ENCODE measurements at regions of chr4 and their contacts with region 1.

Region 1: DNA sequence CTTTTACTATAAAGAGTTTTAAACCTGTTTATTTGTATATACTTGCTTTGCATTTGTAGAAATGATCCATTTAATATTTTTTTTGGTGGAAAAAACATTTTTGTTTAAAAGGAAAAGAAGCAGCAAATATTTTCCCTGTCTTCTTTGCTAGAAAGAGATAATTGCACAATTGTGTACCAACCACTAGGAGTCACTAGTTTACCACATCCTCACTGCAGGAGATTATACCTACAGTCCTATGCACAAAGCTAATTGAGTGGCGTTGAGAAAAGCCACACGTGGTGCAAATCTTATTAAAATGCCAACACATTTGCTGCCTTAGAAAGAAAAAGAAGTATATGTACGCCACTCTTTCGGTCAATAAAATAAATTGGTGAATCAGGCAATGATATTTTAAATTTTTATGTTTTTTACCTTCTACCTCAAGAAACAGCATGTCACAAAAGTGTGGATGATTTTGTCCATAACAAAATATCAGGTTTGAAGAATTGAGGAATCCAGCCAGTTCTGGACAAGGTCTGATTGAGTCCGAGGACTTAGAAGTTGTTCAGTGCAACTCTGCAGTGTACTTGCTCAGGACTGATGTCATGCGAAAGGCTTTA is 102.9 kb downstream of the GRXCR1 start:
- DNase-seq: peak; percentile 66
- H3K4me3 Mint-ChIP-seq: no peak overlapping the region
- H3K27ac Mint-ChIP-seq: no peak overlapping the region
- H3K4me1 Mint-ChIP-seq: no peaks in the 10 kb centered on the region
- H3K27me3 Mint-ChIP-seq: no peaks in the 10 kb centered on the region
- CTCF ChIP-seq: peak; percentile 82

Region 2: DNA sequence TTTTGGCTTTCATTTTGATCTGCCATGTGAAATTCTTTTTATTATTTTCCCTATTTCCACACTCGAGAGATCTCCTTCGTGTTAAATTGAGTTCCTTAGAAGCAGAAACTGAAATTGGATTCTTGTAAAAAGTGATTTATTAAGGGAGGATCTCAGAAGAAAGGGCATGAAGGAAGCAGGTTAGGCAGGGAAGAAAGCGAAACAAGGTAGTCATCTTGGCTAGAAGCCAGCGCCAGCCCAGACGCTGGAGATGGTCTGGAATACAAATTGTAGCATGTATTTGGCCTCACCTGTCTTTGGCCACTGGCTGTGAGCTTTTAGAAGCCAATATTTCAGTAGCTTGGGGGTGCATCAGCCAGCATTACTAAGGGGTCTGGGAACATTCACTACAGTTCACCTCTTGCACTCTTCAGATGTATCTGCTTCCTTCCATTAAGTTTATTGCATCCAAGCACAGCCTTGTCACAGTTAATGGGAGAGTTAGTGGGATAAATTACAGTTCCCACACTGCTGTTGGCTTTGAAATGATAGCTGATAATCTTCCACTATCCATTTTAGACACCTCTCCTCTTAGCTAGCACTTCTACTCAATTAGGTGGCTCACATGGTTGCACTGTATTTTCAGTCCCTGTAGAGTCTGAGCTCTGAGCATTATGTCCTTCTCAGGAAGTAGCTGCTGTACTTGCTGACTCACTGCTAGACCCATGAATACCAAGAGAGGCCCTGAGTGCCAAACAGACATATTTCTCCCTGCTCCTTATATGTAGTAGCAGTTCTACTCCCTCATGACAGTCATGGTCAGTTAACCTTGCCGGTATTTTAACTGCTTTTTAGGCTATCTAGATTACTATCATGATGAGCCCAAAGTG is 88.3 kb before region 1 on chr4:
- CTCF ChIA-PET with region 1: no interaction called
- POLR2A ChIA-PET with region 1: no interaction called
- intact Hi-C with region 1: no loop called
- DNase-seq: peak; percentile 71
- H3K4me3 Mint-ChIP-seq: peak overlapping the region; percentile 58
- H3K27ac Mint-ChIP-seq: peak overlapping the region; percentile 51
- H3K4me1 Mint-ChIP-seq: peaks cover 9% of the 10 kb centered on the region
- H3K27me3 Mint-ChIP-seq: no peaks in the 10 kb centered on the region
- CTCF ChIP-seq: no peak

Region 3: DNA sequence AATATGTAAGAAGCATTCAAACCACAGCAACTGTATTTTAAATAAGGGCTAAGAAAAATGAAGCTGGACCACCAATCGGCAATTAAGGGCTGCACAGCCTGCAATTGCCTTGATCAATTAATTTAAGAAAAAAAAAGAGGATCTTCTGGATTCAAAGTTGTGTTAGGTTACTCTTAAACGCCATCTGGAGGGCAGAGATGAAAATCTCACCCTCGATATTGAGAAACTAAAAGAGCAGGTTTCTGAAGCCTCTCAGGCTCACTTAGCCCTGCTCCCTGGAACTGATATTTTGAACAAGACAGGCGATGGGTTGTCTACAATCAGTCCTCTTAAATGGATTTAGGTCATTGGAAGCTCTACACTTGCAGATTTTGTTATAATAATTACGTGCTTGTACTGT is 476.5 kb after region 1 on chr4:
- CTCF ChIA-PET with region 1: interaction called, 3 read pairs
- POLR2A ChIA-PET with region 1: no interaction called
- intact Hi-C with region 1: loop called (anchors 5 kb)
- DNase-seq: no peak
- H3K4me3 Mint-ChIP-seq: no peak overlapping the region
- H3K27ac Mint-ChIP-seq: no peak overlapping the region
- H3K4me1 Mint-ChIP-seq: no peaks in the 10 kb centered on the region
- H3K27me3 Mint-ChIP-seq: no peaks in the 10 kb centered on the region
- CTCF ChIP-seq: peak; percentile 7

Region 4: GRCh38 chr4:44425614-44426208 is 1430.3 kb after region 1 on chr4:
- CTCF ChIA-PET with region 1: interaction called, 6 read pairs
- POLR2A ChIA-PET with region 1: no interaction called
- intact Hi-C with region 1: loop called (anchors 2 kb)
- DNase-seq: peak; percentile 67
- H3K4me3 Mint-ChIP-seq: no peak overlapping the region
- H3K27ac Mint-ChIP-seq: no peak overlapping the region
- H3K4me1 Mint-ChIP-seq: no peaks in the 10 kb centered on the region
- H3K27me3 Mint-ChIP-seq: no peaks in the 10 kb centered on the region
- CTCF ChIP-seq: peak; percentile 71

Region 5: GRCh38 chr4:44629280-44629866 is 1633.9 kb after region 1 on chr4:
- CTCF ChIA-PET with region 1: interaction called, 4 read pairs
- POLR2A ChIA-PET with region 1: no interaction called
- intact Hi-C with region 1: loop called (anchors 1 kb)
- DNase-seq: peak; percentile 72
- H3K4me3 Mint-ChIP-seq: no peak overlapping the region
- H3K27ac Mint-ChIP-seq: peak overlapping the region; percentile 71
- H3K4me1 Mint-ChIP-seq: no peaks in the 10 kb centered on the region
- H3K27me3 Mint-ChIP-seq: no peaks in the 10 kb centered on the region
- CTCF ChIP-seq: peak; percentile 74